CD14-positive monocyte (primary cell): ENCODE measurements at regions of chr7 and their contacts with region 1.

Region 1: DNA sequence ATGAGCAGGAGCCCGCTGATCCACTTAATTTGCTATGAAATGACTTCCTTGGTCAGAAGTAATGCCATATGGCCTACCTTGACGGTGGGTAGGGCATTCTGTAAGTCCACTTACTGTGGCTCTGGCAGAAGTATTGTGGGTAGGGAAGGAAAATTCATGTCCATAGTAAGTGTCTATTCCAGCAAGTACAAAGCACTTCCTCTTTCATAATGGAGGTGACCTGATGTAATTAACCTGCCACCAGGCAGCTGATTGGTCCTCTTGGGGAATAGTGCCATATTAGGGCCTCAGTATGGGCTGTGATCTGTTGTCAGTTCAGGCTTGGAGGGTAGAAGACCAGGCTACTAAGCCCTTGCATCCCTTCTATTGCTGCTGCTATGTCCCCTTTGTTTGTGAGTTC is 103.9 kb downstream of the SLC37A3 start:
- DNase-seq: peak in 2 of 3 donors; percentile 45 to 47
- H3K4me3 ChIP-seq: no peak overlapping the region
- H3K4me3 Mint-ChIP-seq: no peak overlapping the region
- H3K27ac ChIP-seq: no peak overlapping the region
- H3K27ac Mint-ChIP-seq: peak overlapping the region in 2 of 7 donors; percentile 42 to 78
- H3K4me1 ChIP-seq: peaks cover 5 to 8% of the 10 kb centered on the region in 2 donors
- H3K4me1 Mint-ChIP-seq: peaks cover 15% of the 10 kb centered on the region
- H3K27me3 ChIP-seq: no peaks in the 10 kb centered on the region
- H3K27me3 Mint-ChIP-seq: peaks cover 0 to 5% (median 0%) of the 10 kb centered on the region in 3 donors
- CTCF ChIP-seq: no peak

Region 2: DNA sequence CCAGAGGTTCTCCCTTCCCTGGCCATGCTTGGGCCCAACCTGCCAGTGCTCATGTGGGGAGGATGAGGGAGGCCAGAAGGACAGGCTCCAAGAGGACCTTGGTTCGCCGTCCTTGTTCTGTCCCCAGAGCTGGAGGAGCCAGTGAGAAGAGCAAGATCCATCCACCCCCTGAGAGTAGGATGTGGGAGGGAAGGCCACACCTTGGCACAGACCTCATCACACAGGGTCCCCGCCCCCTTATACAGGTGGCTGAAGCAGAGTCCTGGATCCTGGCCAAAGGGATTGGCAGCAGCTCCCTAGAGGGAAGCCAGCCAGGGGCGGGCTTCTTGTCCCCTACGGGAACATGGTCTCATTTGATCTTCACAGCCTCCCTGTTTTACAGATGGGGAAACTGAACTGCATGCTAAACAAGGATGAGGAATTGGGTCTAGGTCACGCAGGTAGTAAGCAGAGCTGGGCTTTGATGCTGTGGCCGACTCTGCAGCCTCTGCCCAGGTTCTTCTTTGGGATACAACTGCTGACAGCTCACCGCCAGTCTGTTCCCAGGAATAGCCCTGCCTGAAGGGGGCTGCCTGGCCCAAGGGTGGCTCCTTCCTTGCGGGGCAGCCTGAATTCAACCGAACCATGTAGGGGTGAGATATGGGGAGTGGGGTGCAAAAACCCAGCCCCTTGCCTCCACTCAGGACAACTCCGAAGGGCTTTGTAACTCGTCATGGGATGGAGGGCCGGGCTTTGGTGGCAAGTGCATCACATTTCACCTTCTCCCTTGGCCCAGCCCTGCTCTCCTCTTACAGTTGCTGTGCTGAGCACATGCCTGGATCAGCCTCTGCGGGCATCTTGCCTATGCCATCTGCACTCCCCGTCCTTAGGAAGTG is 55.4 kb before region 1 on chr7:
- intact Hi-C with region 1: loop called in 1 of 2 experiments (anchors 5 kb)
- DNase-seq: no peak
- H3K4me3 ChIP-seq: no peak overlapping the region
- H3K4me3 Mint-ChIP-seq: no peak overlapping the region
- H3K27ac ChIP-seq: no peak overlapping the region
- H3K27ac Mint-ChIP-seq: peak overlapping the region in 1 of 7 donors; percentile 42
- H3K4me1 ChIP-seq: peaks cover 45 to 60% of the 10 kb centered on the region in 2 donors
- H3K4me1 Mint-ChIP-seq: peaks cover 54% of the 10 kb centered on the region
- H3K27me3 ChIP-seq: no peaks in the 10 kb centered on the region
- H3K27me3 Mint-ChIP-seq: peaks cover 0 to 4% (median 0%) of the 10 kb centered on the region in 3 donors
- CTCF ChIP-seq: no peak

Region 3: GRCh38 chr7:140857048-140857447 is 562.6 kb after region 1 on chr7:
- intact Hi-C with region 1: no loop called
- DNase-seq: no peak
- H3K4me3 ChIP-seq: no peak overlapping the region
- H3K4me3 Mint-ChIP-seq: no peak overlapping the region
- H3K27ac ChIP-seq: no peak overlapping the region
- H3K27ac Mint-ChIP-seq: no peak overlapping the region
- H3K4me1 ChIP-seq: no peaks in the 10 kb centered on the region
- H3K4me1 Mint-ChIP-seq: no peaks in the 10 kb centered on the region
- H3K27me3 ChIP-seq: no peaks in the 10 kb centered on the region
- H3K27me3 Mint-ChIP-seq: peaks cover 0 to 2% (median 0%) of the 10 kb centered on the region in 3 donors
- CTCF ChIP-seq: no peak